PC-9 (cell line): ENCODE measurements at regions of chr19 and their contacts with region 1.

Region 1: GRCh38 chr19:58326914-58327726 is at the start of gene ZSCAN22:
- DNase-seq: peak; percentile 86 to 90
- H3K4me3 ChIP-seq: peak within 1 kb of the TSS; percentile 80
- H3K27ac ChIP-seq: peak within 1 kb of the TSS; percentile 50
- H3K4me1 ChIP-seq: no peaks in the 10 kb centered on the region; the same call in 1 of the 2 replicates
- H3K27me3 ChIP-seq: no peaks in the 10 kb centered on the region
- CTCF ChIP-seq: no peak
- total RNA-seq, gene ZSCAN22: 0.08 TPM in 1 of 2 replicates, not detected in the other

Region 2: GRCh38 chr19:58203814-58204475 is 123.2 kb before region 1 on chr19:
- CTCF ChIA-PET with region 1: no interaction called
- POLR2A ChIA-PET with region 1: no interaction called
- intact Hi-C with region 1: no loop called
- DNase-seq: peak in 1 of 2 experiments; percentile 15
- H3K4me3 ChIP-seq: no peak overlapping the region
- H3K27ac ChIP-seq: no peak overlapping the region
- H3K4me1 ChIP-seq: no peaks in the 10 kb centered on the region
- H3K27me3 ChIP-seq: no peaks in the 10 kb centered on the region
- CTCF ChIP-seq: no peak

Region 3: DNA sequence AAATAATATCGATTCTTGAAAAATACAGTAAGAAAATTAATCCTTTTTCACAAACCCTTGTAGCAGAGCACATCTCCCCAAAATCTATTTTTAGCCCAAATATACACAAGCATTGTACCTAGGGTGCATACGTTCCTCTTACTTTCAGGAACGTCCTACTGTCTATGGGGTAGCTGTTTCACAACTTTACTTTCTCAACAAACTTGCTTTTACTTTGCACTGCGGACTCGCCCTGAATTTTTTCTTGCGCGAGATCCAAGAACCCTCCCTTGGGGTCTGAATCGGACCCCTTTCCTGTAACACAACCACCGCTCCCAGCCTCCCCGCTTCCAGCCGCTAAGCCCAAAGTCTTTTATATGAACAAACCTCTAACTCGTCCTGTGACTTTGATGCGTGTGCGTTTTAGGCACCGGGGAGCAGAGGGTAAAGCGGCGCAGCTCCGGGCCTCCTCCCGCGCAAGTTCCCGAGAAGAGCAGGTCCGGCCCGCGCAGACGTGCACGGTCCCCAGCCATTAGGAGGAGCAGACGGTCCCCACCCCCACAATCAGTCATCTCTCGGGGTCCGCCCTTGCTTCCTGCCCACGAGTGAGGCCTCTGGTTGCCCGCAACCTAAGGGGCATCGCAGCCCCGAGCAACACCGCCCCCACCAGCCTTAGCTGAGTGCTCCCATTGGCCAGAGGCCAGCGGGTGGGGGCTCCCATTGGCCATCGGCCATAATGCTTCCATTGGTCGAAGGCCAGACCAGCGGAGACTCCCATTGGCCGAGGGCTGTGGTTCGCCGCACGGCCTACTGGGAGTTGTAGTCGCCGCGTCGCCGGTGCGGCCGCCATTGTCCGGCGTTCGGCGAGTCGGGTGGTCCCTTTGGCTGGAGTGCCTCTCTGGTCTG is 48.7 kb before region 1 on chr19 and contains the start of gene ZNF8:
- CTCF ChIA-PET with region 1: no interaction called
- POLR2A ChIA-PET with region 1: interaction called, 4 read pairs
- intact Hi-C with region 1: loop called (anchors 2 kb)
- DNase-seq: peak; percentile 92 to 97
- H3K4me3 ChIP-seq: peak within 1 kb of the TSS; percentile 79
- H3K27ac ChIP-seq: 0 out of 2 replicates have a peak within 1 kb of the TSS, but pooled peaks have one; percentile 17
- H3K4me1 ChIP-seq: peaks cover 6% of the 10 kb centered on the region; the same call in 1 of the 2 replicates
- H3K27me3 ChIP-seq: no peaks in the 10 kb centered on the region
- CTCF ChIP-seq: no peak
- total RNA-seq, gene ZNF8: 6.2 and 6.4 TPM in 2 replicates

Region 4: DNA sequence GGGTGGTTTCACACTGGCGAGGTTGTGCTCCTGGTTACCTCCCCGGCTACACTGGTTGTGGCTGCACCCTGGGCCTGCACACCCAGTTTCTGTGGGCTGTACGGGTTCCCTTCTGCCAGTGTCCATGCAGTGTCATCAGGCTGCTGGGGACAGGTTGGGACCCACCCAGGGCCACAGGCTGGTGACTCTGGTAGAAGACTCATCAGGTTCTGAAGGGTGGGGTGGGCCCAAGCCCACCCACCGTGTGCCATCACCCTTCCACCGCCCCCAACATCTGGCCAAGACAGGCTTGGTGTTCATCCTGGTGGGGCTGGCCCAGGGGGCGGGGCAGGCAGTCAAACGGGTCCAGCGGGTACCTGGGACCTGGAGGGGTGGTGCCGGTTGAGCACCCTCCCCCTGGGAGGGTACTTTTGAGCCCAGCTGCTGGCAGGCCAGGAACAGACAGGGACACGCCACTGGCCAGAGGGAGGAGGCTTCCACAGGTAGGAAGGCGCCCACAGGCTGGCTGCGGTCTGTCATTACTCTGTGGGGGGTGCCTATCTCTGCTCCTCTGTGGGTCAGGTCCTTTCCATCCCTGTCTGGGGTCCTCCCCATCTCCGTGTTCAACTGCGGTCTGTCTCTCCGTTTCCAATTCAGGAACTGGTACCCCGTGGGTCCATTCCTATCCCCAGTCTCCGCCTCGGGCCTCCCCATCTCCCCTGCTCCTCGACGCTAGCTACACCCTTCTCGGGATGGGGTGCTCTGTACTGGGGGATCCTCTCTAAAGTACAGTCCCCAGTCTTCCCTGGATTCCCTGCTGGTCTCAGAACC is 68.3 kb after region 1 on chr19 and contains the start of gene RNF225:
- CTCF ChIA-PET with region 1: no interaction called
- POLR2A ChIA-PET with region 1: no interaction called
- intact Hi-C with region 1: no loop called
- DNase-seq: peak; percentile 60 to 89
- H3K4me3 ChIP-seq: no peak within 1 kb of the TSS
- H3K27ac ChIP-seq: peak within 1 kb of the TSS; percentile 66
- H3K4me1 ChIP-seq: peaks cover 27% of the 10 kb centered on the region
- H3K27me3 ChIP-seq: no peaks in the 10 kb centered on the region
- CTCF ChIP-seq: no peak
- total RNA-seq, gene RNF225: 0.61 and 0.68 TPM in 2 replicates

Region 5: GRCh38 chr19:58554494-58555368 is 227.6 kb after region 1 on chr19 and contains the start of gene CHMP2A:
- CTCF ChIA-PET with region 1: no interaction called
- POLR2A ChIA-PET with region 1: interaction called, 12 read pairs
- intact Hi-C with region 1: no loop called
- DNase-seq: peak; percentile 79 to 96
- H3K4me3 ChIP-seq: peak within 1 kb of the TSS; percentile 73
- H3K27ac ChIP-seq: peak within 1 kb of the TSS; percentile 41; the same call in 1 of the 2 replicates
- H3K4me1 ChIP-seq: peaks cover 7% of the 10 kb centered on the region; the same call in 1 of the 2 replicates
- H3K27me3 ChIP-seq: no peaks in the 10 kb centered on the region
- CTCF ChIP-seq: no peak
- total RNA-seq, gene CHMP2A: 149 and 186 TPM in 2 replicates